ENCODE measurements at regions of chr19 and their contacts with region 1.

Region 1: DNA sequence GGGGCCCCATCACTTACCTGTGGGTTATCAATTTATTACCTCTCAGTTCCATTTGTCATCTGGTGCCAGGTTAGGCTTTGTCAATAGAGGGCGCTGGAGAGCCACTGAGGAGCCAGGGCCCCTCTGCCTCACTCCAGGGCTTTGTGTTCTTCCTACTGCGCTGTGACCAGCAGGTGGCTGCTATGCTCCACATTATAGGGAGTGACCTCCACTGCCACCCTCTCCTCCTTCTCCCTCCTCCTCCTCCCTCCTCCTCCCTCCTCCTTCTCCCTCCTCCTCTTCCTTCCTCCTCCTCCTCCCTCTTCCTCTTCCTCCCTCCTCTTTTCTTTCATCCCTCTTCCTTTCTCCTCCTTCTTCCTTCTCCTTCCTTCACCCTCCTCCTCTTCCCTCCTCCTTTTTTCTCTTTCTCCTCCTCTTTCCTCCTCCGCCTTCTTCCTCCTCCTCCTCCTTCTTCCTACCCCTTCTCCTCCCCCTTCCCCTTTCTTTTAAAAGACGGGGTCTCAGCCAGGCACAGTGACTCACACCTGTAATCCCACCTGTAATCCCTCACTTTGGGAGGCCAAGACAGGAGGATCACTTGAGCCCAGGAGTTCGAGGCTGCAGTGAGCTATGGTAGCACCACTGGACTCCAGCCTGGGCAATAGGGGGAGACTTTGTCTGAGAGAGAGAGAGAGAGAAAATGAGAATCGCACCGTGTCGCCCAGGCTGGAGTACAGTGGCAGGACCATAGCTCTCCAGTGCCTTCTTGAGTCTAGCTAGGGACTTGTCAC is 10.3 kb upstream of the ZBTB32 start:
- DNase-seq: peak; percentile 94
- H3K4me3 Mint-ChIP-seq: no peak overlapping the region
- H3K27ac Mint-ChIP-seq: no peak overlapping the region
- H3K4me1 Mint-ChIP-seq: peaks cover 8% of the 10 kb centered on the region
- H3K27me3 Mint-ChIP-seq: no peaks in the 10 kb centered on the region
- CTCF ChIP-seq: peak; percentile 99

Region 2: GRCh38 chr19:35555301-35556005 is 138.6 kb before region 1 on chr19:
- CTCF ChIA-PET with region 1: interaction called, 3 read pairs
- intact Hi-C with region 1: loop called (anchors 2 kb)
- DNase-seq: peak; percentile 71
- H3K4me3 Mint-ChIP-seq: no peak overlapping the region
- H3K27ac Mint-ChIP-seq: no peak overlapping the region
- H3K4me1 Mint-ChIP-seq: no peaks in the 10 kb centered on the region
- H3K27me3 Mint-ChIP-seq: peaks cover 67% of the 10 kb centered on the region
- CTCF ChIP-seq: peak; percentile 77

Region 3: GRCh38 chr19:35716801-35717666 is 23.0 kb after region 1 on chr19:
- CTCF ChIA-PET with region 1: interaction called, 4 read pairs
- intact Hi-C with region 1: loop called (anchors 1 kb)
- DNase-seq: peak; percentile 96
- H3K4me3 Mint-ChIP-seq: peak overlapping the region; percentile 77
- H3K27ac Mint-ChIP-seq: peak overlapping the region; percentile 45
- H3K4me1 Mint-ChIP-seq: peaks cover 30% of the 10 kb centered on the region
- H3K27me3 Mint-ChIP-seq: peaks cover 25% of the 10 kb centered on the region
- CTCF ChIP-seq: peak; percentile 97

Region 4: GRCh38 chr19:35816262-35816661 is 122.2 kb after region 1 on chr19:
- CTCF ChIA-PET with region 1: interaction called, 4 read pairs
- intact Hi-C with region 1: loop called (anchors 5 kb)
- DNase-seq: no peak
- H3K4me3 Mint-ChIP-seq: no peak overlapping the region
- H3K27ac Mint-ChIP-seq: no peak overlapping the region
- H3K4me1 Mint-ChIP-seq: peaks cover 12% of the 10 kb centered on the region
- H3K27me3 Mint-ChIP-seq: peaks cover 39% of the 10 kb centered on the region
- CTCF ChIP-seq: no peak

Measured in Calu3 (cell line).